Esophagus muscularis mucosa (tissue), 4 donors: ENCODE measurements at regions of chr2 and their contacts with region 1.

Region 1: GRCh38 chr2:118061135-118061955 is 26.9 kb upstream of the INSIG2 start:
- DNase-seq: no peak
- H3K4me3 ChIP-seq: no peak overlapping the region
- H3K27ac ChIP-seq: no peak overlapping the region
- H3K4me1 ChIP-seq: no peaks in the 10 kb centered on the region
- H3K27me3 ChIP-seq: peaks cover 0 to 65% (median 6%) of the 10 kb centered on the region in 4 donors
- CTCF ChIP-seq: peak in 1 of 3 experiments; percentile 5
- EP300 ChIP-seq: no peak
- POLR2A ChIP-seq: no peak

Region 2: GRCh38 chr2:117985092-117985491 is 76.3 kb before region 1 on chr2:
- intact Hi-C with region 1: no loop called
- DNase-seq: no peak
- H3K4me3 ChIP-seq: no peak overlapping the region
- H3K27ac ChIP-seq: no peak overlapping the region
- H3K4me1 ChIP-seq: peaks cover 5 to 13% (median 8%) of the 10 kb centered on the region in 4 donors
- H3K27me3 ChIP-seq: no peaks in the 10 kb centered on the region
- CTCF ChIP-seq: no peak
- EP300 ChIP-seq: no peak
- POLR2A ChIP-seq: no peak

Region 3: GRCh38 chr2:118202707-118203303 is 141.5 kb after region 1 on chr2:
- intact Hi-C with region 1: loop called (anchors 10 kb)
- DNase-seq: peak; percentile 85
- H3K4me3 ChIP-seq: no peak overlapping the region
- H3K27ac ChIP-seq: no peak overlapping the region
- H3K4me1 ChIP-seq: no peaks in the 10 kb centered on the region
- H3K27me3 ChIP-seq: peaks cover 0 to 36% (median 0%) of the 10 kb centered on the region in 4 donors
- CTCF ChIP-seq: peak; percentile 48 to 75 (median 56)
- EP300 ChIP-seq: no peak
- POLR2A ChIP-seq: no peak